ENCODE measurements at regions of chr19 and their contacts with region 1.

Region 1: DNA sequence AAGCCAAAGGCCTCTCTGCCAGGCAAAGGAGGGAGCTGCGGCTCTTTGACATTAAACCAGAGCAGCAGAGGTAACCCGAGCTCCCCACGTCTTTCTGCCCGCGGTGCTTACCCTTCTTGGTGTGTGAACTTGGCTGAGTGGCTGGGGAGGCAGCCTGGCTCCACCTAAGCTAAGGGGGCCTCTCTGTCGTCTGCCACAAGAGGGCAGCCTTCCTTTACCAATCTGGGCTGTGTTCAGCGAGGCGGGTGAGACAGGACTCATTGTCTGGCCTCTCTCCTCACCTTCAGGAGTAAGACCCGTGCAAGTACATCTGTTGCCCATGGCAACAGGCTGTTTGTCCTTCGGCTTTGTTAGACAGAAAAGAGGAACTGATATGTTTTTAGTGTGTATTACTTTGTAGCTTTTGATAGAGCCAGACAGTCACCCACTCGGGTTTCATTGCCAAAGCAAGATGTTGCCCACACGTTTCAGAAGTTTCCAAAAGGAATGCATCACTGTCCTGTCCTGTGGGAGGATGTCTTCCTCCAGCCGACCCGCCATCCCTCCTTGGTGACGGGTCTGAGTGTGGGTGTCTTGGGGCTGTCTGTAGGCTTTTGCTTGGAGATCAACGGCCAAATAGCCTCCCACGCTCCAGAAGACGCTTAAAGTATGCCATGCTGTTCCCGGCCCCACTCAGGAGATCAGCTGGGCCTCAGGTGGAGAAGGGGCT is 4.6 kb downstream of the POP4 start:
- DNase-seq: peak; percentile 90
- CTCF ChIP-seq: peak; percentile 93

Region 2: DNA sequence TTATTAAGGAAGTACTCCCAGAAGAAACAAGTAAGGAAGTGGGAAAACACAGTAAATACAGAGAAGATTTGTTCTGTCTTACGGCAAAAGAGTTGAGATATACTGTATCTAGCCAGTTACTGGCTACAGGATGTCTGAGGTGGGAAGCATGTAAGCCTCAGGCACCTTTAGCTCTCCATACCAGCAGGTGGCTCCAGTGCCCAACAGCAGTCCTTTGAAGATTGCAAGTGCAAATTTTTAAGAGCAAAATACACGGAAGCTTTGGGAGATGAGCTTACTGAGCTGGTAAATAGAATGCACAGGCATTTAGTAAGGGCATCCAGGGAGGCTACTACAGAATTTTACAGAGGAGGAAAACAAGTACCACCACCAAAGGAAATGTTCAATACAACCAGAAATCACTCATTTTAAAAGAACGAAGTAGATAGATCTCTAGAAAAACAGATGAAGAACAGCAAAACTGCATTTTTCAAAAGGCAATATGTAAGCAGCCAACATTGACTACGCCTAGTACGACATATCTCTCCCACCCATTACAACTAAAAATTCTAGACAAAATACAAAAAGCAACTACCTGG is 142.8 kb before region 1 on chr19:
- CTCF ChIA-PET with region 1: no interaction called
- POLR2A ChIA-PET with region 1: no interaction called
- DNase-seq: no peak
- CTCF ChIP-seq: peak; percentile 31

Region 3: DNA sequence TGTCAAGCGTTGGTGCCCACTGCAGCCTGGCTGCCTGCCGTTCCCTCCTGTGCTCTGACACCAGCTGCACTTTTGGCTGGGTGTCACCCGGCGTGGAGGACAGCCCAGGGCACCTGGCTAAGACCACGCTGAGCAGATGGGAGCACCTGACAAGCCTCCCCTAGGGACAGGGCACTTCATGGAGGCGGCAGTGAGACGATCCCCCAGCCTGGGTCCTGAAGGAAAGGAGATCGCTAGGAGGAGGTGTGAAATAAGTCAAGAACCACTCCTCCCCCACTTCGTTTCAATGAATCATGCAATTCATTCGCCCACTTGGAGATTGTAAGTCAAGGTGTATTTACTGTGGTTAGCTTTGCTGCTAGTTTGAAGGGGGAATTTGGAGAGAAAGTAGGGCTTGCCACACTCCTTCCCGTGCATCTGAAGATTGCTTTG is 46.1 kb before region 1 on chr19:
- CTCF ChIA-PET with region 1: no interaction called
- POLR2A ChIA-PET with region 1: no interaction called
- DNase-seq: no peak
- CTCF ChIP-seq: no peak

Region 4: GRCh38 chr19:29576761-29577648 is 33.7 kb before region 1 on chr19:
- CTCF ChIA-PET with region 1: interaction called, 11 read pairs
- POLR2A ChIA-PET with region 1: interaction called, 3 read pairs
- DNase-seq: peak; percentile 62
- CTCF ChIP-seq: no peak

Region 5: GRCh38 chr19:29629816-29630555 is 19.3 kb after region 1 on chr19:
- CTCF ChIA-PET with region 1: interaction called, 11 read pairs
- POLR2A ChIA-PET with region 1: no interaction called
- DNase-seq: no peak
- CTCF ChIP-seq: no peak

Region 6: DNA sequence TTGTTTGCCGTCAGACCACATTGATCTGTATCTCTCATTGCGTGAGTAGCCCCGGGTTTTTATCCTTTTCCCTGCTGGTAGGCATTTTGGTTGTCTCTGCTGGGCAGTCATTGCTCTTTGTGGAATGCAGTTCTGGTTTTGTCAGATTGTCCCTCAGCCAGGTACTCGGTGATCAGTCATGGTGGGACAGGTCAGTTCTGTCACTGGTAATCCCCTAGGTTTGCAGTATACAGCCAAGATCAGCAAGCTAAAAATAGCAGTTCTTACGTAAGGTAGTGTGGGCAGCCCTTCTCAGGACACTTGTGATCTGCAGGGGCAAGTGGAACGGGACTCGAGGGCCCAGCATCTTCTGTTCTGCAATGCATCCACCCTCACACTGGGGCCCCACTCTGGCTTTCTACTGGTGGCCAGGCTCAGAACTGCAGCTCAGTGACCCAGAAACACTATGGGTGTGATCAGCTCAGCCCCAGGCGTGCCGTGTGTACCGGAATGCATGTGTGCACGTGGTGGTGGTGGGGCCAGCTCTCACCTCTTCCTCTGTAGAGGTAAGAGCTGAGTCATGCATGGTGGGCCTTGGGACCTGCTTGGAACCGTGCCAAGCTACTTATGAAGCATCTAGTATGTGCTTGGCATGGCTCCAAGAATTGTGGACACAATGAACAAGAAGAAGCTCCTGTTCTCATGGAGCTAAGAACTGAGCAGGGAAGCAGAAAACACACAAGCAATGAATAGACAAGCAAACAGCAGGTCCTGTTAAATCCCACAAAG is 60.9 kb after region 1 on chr19:
- CTCF ChIA-PET with region 1: interaction called, 58 read pairs
- POLR2A ChIA-PET with region 1: interaction called, 3 read pairs
- DNase-seq: peak; percentile 76
- CTCF ChIP-seq: peak; percentile 26

Region 7: GRCh38 chr19:29714953-29715700 is 104.4 kb after region 1 on chr19 and contains the start of gene C19orf12:
- CTCF ChIA-PET with region 1: interaction called, 115 read pairs
- POLR2A ChIA-PET with region 1: interaction called, 8 read pairs
- DNase-seq: peak; percentile 81
- CTCF ChIP-seq: no peak

Region 8: DNA sequence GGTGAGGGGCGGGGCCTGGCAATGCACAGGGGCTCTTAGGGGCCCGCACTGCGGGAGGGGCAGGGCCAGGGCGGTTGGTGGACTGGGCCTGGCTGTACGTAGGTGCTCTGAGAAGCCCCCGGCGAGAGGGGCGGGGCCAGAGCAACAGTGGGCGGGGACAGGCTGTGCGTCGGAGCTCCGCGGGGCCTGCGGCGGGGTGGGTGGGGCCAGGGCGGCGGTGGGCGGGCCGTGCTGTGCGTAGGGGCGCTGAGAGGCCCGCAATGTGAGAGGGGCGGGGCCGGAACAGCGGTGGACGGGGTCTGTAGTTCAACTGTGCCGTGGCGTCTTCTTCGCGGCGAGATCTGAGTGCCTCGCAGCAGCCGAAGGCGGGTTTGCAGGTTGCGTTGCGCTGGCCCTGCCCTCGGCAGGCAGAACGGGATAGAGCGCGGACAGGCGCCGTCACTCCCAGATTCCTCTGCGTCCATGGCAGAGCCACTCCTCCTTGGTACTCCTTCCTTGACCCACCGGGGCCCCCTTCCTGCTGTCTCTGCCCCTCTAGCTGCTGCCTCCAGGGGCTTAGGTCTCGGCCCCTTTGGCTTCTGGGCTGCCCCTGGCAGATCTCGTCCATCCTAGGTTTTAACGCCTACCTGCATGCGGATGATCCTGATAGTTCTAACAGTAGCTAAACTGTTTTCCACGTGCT is 234.3 kb after region 1 on chr19:
- CTCF ChIA-PET with region 1: no interaction called
- POLR2A ChIA-PET with region 1: interaction called, 13 read pairs
- DNase-seq: peak; percentile 95
- CTCF ChIP-seq: peak; percentile 1